Activated CD4-positive, alpha-beta memory T cell treated with anti-CD3 and anti-CD28 coated beads, Interleukin-2, amount 10 ng/mL, durations not matched to agents 7 days and 5 days (primary cell): ENCODE measurements at regions of chr1 and their contacts with region 1.

Region 1: DNA sequence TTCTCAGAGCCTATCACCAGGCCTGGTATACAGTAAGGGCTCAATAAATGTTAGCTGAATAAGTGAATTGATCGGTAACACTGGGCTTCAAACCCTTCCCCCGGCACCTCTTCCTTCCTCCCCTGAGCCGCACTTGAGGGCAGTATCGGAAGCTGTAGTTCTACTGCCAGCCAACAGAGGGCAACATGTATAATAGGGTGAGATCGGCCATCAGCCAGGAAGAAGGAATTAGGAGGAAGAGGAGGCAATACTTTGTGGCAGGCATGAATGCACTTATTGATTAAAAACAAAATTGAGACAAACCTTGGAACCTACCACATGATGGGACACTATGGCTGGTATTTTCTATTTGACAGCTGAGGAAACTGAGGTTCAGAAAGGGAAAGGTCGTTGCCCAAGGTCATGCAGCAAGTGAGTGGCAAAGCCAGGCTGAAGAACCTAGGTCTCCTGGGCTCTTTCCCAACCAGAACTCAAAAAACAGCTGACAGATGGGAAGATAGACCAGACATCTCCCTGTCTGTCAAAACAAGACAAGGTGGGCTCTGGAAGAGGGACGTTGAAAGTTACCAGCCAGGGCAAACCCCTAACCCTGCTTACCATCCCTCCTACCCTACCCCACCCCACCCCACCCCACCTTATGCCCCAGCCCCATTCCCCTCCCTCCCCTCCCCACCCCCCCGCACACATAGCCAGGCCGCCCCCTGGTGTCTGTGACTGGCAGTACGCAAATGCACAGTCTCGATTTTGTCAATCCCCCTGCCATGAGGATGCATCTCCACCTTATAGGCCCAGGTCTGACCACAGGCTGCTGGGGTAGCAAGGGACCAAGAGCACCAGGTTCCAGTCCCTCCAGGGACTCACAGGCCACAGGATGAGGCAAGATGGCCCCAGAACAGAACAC is 107.3 kb upstream of the RUNX3 start:
- DNase-seq: peak; percentile 75
- H3K4me3 Mint-ChIP-seq: no peak overlapping the region
- H3K27ac Mint-ChIP-seq: peak overlapping the region; percentile 38
- H3K4me1 Mint-ChIP-seq: peaks cover 28% of the 10 kb centered on the region
- H3K27me3 Mint-ChIP-seq: peaks cover 20% of the 10 kb centered on the region

Region 2: GRCh38 chr1:24946861-24947658 is 90.4 kb before region 1 on chr1:
- CTCF ChIA-PET with region 1: interaction called, 42 read pairs
- POLR2A ChIA-PET with region 1: interaction called, 19 read pairs
- DNase-seq: no peak
- H3K4me3 Mint-ChIP-seq: no peak overlapping the region
- H3K27ac Mint-ChIP-seq: no peak overlapping the region
- H3K4me1 Mint-ChIP-seq: peaks cover 77% of the 10 kb centered on the region
- H3K27me3 Mint-ChIP-seq: no peaks in the 10 kb centered on the region

Region 3: GRCh38 chr1:24964811-24965570 is 72.4 kb before region 1 on chr1:
- CTCF ChIA-PET with region 1: interaction called, 126 read pairs
- POLR2A ChIA-PET with region 1: interaction called, 137 read pairs
- DNase-seq: peak; percentile 98
- H3K4me3 Mint-ChIP-seq: peak overlapping the region; percentile 95
- H3K27ac Mint-ChIP-seq: peak overlapping the region; percentile 94
- H3K4me1 Mint-ChIP-seq: peaks cover 80% of the 10 kb centered on the region
- H3K27me3 Mint-ChIP-seq: no peaks in the 10 kb centered on the region

Region 4: GRCh38 chr1:24990779-24991641 is 46.4 kb before region 1 on chr1:
- CTCF ChIA-PET with region 1: interaction called, 31 read pairs
- POLR2A ChIA-PET with region 1: interaction called, 6 read pairs
- DNase-seq: no peak
- H3K4me3 Mint-ChIP-seq: no peak overlapping the region
- H3K27ac Mint-ChIP-seq: peak overlapping the region; percentile 97
- H3K4me1 Mint-ChIP-seq: peaks cover 88% of the 10 kb centered on the region
- H3K27me3 Mint-ChIP-seq: peaks cover 10% of the 10 kb centered on the region

Region 5: GRCh38 chr1:25022361-25023189 is 14.8 kb before region 1 on chr1:
- CTCF ChIA-PET with region 1: interaction called, 78 read pairs
- POLR2A ChIA-PET with region 1: interaction called, 93 read pairs
- DNase-seq: peak; percentile 96
- H3K4me3 Mint-ChIP-seq: peak overlapping the region; percentile 73
- H3K27ac Mint-ChIP-seq: peak overlapping the region; percentile 97
- H3K4me1 Mint-ChIP-seq: peaks cover 96% of the 10 kb centered on the region
- H3K27me3 Mint-ChIP-seq: no peaks in the 10 kb centered on the region